T-cell (primary cell): ENCODE measurements at regions of chr15 and their contacts with region 1.

Region 1: GRCh38 chr15:52163321-52164190 is 27.6 kb downstream of the GNB5 start:
- DNase-seq: peak in 13 of 35 experiments; percentile 6 to 42 (median 16)
- ATAC-seq: peak in 2 of 4 experiments; percentile 37 to 40
- H3K4me3 ChIP-seq: no peak overlapping the region
- H3K4me3 Mint-ChIP-seq: no peak overlapping the region
- H3K27ac ChIP-seq: no peak overlapping the region
- H3K27ac Mint-ChIP-seq: no peak overlapping the region
- H3K4me1 ChIP-seq: peaks cover 2 to 5% of the 10 kb centered on the region in 2 experiments
- H3K4me1 Mint-ChIP-seq: peaks cover 34 to 44% (median 36%) of the 10 kb centered on the region in 3 donors
- H3K27me3 ChIP-seq: no peaks in the 10 kb centered on the region
- H3K27me3 Mint-ChIP-seq: no peaks in the 10 kb centered on the region

Region 2: DNA sequence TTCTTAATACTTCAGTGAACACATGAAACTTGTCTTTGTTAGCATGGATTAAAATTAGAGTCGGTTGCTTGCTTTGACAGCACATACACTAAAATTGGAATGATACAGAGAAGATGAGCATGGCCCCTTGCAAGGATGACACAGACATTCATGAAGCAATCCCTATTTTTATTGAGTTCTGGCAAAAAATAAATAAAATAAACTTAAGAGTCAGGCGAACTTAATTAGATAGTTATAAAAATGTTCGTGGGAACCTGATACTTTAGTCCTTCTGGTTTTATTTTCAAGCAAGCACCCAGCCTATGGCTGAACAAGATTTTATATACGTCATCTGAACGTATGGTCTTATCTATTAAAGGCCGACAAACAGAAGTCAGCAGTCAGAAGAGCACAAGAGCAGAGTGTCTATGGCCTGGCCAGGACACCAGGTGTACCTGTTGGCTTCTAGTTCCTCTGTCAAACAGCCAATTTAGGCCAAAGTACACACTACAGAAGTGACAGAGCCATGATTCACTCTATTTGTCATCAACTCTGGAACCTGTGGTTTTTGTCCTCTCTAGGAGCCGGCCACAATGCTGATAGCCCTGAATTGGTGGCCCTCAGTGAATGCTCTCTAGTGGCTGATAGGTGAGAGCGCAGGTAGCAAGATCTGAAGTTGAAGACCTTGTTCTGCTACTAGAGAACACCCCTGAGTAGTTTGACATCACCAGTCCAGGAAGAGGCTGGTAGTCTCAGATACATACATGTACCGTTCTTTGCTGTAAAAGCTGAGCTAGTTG is 256.2 kb before region 1 on chr15:
- CTCF ChIA-PET with region 1: interaction called in 1 of 2 experiments, 13 read pairs
- POLR2A ChIA-PET with region 1: no interaction called
- DNase-seq: no peak
- ATAC-seq: no peak
- H3K4me3 ChIP-seq: no peak overlapping the region
- H3K4me3 Mint-ChIP-seq: no peak overlapping the region
- H3K27ac ChIP-seq: no peak overlapping the region
- H3K27ac Mint-ChIP-seq: no peak overlapping the region
- H3K4me1 ChIP-seq: no peaks in the 10 kb centered on the region
- H3K4me1 Mint-ChIP-seq: no peaks in the 10 kb centered on the region
- H3K27me3 ChIP-seq: no peaks in the 10 kb centered on the region
- H3K27me3 Mint-ChIP-seq: no peaks in the 10 kb centered on the region

Region 3: GRCh38 chr15:52124270-52124880 is 39.2 kb before region 1 on chr15:
- CTCF ChIA-PET with region 1: interaction called in 1 of 2 experiments, 4 read pairs
- POLR2A ChIA-PET with region 1: interaction called in 1 of 2 experiments, 13 read pairs
- DNase-seq: no peak
- ATAC-seq: peak in 1 of 4 experiments; percentile 8
- H3K4me3 ChIP-seq: no peak overlapping the region
- H3K4me3 Mint-ChIP-seq: no peak overlapping the region
- H3K27ac ChIP-seq: no peak overlapping the region
- H3K27ac Mint-ChIP-seq: no peak overlapping the region
- H3K4me1 ChIP-seq: no peaks in the 10 kb centered on the region
- H3K4me1 Mint-ChIP-seq: no peaks in the 10 kb centered on the region
- H3K27me3 ChIP-seq: no peaks in the 10 kb centered on the region
- H3K27me3 Mint-ChIP-seq: no peaks in the 10 kb centered on the region

Region 4: GRCh38 chr15:52139599-52140491 is 23.7 kb before region 1 on chr15:
- CTCF ChIA-PET with region 1: interaction called in 1 of 2 experiments, 3 read pairs
- POLR2A ChIA-PET with region 1: interaction called in 1 of 2 experiments, 11 read pairs
- DNase-seq: peak in 33 of 35 experiments; percentile 11 to 74 (median 52)
- ATAC-seq: peak in 3 of 4 experiments; percentile 37 to 58 (median 46)
- H3K4me3 ChIP-seq: no peak overlapping the region
- H3K4me3 Mint-ChIP-seq: no peak overlapping the region
- H3K27ac ChIP-seq: no peak overlapping the region
- H3K27ac Mint-ChIP-seq: no peak overlapping the region
- H3K4me1 ChIP-seq: peaks cover 4 to 26% of the 10 kb centered on the region in 2 experiments
- H3K4me1 Mint-ChIP-seq: peaks cover 24 to 38% (median 31%) of the 10 kb centered on the region in 3 donors
- H3K27me3 ChIP-seq: no peaks in the 10 kb centered on the region
- H3K27me3 Mint-ChIP-seq: no peaks in the 10 kb centered on the region

Region 5: DNA sequence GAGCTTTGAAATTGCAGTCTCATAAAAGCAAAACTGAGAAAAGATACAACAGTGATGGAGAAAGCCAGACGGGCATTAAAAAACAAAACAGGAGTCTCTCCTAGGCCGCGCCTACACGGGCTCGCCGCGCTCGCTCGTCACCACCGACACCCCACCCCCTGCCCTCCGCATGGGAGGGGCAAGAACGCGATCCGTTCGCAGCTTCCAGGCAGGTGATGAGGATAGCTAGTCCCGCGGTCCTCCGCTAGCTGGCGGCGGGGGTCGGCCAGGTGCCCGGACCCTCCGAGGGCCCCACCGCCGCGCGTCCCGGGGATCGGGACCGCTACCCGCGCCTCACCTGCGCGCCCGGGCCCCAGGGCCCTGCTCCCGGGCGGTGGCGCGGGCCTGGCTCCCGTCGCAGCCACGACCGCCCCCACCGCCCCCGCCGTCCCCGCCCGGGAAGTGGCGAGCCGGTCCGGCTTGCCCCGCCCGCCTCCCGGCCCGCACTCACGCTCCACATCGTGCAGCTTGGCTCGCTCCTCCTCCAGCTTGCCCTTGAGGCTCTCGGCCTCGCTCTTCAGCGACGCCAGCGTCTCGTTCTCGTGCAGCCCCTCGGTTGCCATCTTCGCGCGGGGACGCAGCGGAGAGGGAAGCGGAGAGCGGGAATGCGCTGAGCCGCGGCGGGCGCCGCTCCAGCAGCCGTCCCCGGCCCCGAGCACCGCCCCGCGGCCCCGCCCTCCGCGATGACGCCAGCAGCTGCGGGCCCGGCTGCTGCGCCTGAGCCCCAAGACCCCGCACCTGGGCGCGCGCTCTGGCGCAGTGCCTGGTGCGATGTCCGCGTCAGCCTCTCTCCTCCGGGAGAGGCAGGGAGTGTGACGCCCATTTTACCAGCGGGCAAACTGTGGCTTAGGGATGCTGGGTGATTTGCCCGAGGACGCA is 16.0 kb after region 1 on chr15:
- CTCF ChIA-PET with region 1: interaction called, 5 to 11 read pairs
- POLR2A ChIA-PET with region 1: interaction called, 4 to 9 read pairs
- DNase-seq: peak; percentile 71 to 92 (median 88)
- ATAC-seq: peak; percentile 82 to 90 (median 88)
- H3K4me3 ChIP-seq: peak overlapping the region; percentile 92 to 93
- H3K4me3 Mint-ChIP-seq: peak overlapping the region; percentile 84 to 94 (median 93)
- H3K27ac ChIP-seq: peak overlapping the region; percentile 98
- H3K27ac Mint-ChIP-seq: peak overlapping the region; percentile 97
- H3K4me1 ChIP-seq: peaks cover 9 to 26% of the 10 kb centered on the region in 2 experiments
- H3K4me1 Mint-ChIP-seq: peaks cover 37 to 48% (median 43%) of the 10 kb centered on the region in 3 donors
- H3K27me3 ChIP-seq: no peaks in the 10 kb centered on the region
- H3K27me3 Mint-ChIP-seq: no peaks in the 10 kb centered on the region

Region 6: GRCh38 chr15:52208306-52208946 is 44.9 kb after region 1 on chr15:
- CTCF ChIA-PET with region 1: interaction called, 4 to 10 read pairs
- POLR2A ChIA-PET with region 1: no interaction called
- DNase-seq: peak; percentile 43 to 81 (median 70)
- ATAC-seq: peak; percentile 88 to 100 (median 94)
- H3K4me3 ChIP-seq: no peak overlapping the region
- H3K4me3 Mint-ChIP-seq: no peak overlapping the region
- H3K27ac ChIP-seq: no peak overlapping the region
- H3K27ac Mint-ChIP-seq: no peak overlapping the region
- H3K4me1 ChIP-seq: no peaks in the 10 kb centered on the region
- H3K4me1 Mint-ChIP-seq: no peaks in the 10 kb centered on the region
- H3K27me3 ChIP-seq: no peaks in the 10 kb centered on the region
- H3K27me3 Mint-ChIP-seq: no peaks in the 10 kb centered on the region

Region 7: GRCh38 chr15:52227456-52227855 is 63.9 kb after region 1 on chr15:
- CTCF ChIA-PET with region 1: interaction called, 3 to 19 read pairs
- POLR2A ChIA-PET with region 1: no interaction called
- DNase-seq: peak; percentile 34 to 86 (median 59)
- ATAC-seq: peak; percentile 97 to 99 (median 98)
- H3K4me3 ChIP-seq: no peak overlapping the region
- H3K4me3 Mint-ChIP-seq: no peak overlapping the region
- H3K27ac ChIP-seq: no peak overlapping the region
- H3K27ac Mint-ChIP-seq: no peak overlapping the region
- H3K4me1 ChIP-seq: peaks cover 3 to 6% of the 10 kb centered on the region in 2 experiments
- H3K4me1 Mint-ChIP-seq: peaks cover 11 to 21% (median 15%) of the 10 kb centered on the region in 3 donors
- H3K27me3 ChIP-seq: no peaks in the 10 kb centered on the region
- H3K27me3 Mint-ChIP-seq: no peaks in the 10 kb centered on the region